Activated B cell treated with CpG ODN at 0.5 μM for 24 hours (primary cell): ENCODE measurements at regions of chr10 and their contacts with region 1.

Region 1: GRCh38 chr10:11611248-11612020 is at the start of gene USP6NL:
- DNase-seq: peak; percentile 82
- ATAC-seq: peak; percentile 72
- H3K4me3 Mint-ChIP-seq: peak within 1 kb of the TSS; percentile 95
- H3K27ac Mint-ChIP-seq: peak within 1 kb of the TSS; percentile 96
- H3K4me1 Mint-ChIP-seq: peaks cover 51% of the 10 kb centered on the region
- H3K27me3 Mint-ChIP-seq: no peaks in the 10 kb centered on the region
- CTCF ChIP-seq: no peak
- total RNA-seq, gene USP6NL: 59.9 and 64.5 TPM in 2 replicates

Region 2: DNA sequence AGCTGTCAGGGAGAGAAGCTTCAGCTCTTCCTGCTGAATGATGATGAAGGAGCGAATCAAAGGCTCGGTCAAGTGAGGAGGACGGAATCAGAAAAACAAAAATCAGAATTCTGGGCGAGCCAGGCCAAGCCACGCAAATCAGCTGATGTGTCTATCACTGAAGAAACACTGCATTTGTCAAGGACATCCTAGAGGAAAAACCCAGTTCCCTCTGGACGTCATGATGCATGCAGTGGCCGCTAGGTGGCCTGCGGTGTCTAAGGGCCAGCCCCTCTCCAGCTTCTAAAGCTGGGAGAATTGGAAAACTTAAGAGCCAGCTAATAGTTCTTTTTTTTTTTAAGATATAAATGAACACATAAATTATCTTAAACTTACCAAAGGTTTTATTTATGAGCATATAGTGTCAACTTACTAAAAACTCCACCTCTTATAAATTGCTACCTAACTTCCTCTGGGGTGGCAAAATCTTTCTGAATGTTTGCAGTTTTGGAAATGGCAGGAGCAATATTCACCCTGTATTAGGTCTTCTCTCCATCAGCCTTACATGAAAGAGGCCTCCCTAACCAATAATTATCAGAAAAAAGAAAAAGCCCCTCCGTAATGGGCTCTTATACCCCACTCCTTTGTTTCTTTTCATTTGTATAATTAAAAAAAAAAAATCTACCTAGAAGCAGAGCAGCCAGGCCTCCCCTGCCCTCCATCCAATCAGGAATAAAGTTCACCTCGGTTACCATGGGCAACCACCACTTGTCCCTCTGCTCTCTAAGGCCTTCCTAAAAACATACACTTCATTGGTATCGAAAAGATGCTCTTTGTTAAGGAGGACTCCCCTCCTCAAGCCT is 186.8 kb before region 1 on chr10:
- CTCF ChIA-PET with region 1: no interaction called
- POLR2A ChIA-PET with region 1: no interaction called
- intact Hi-C with region 1: no loop called
- DNase-seq: no peak
- ATAC-seq: no peak
- H3K4me3 Mint-ChIP-seq: no peak overlapping the region
- H3K27ac Mint-ChIP-seq: no peak overlapping the region
- H3K4me1 Mint-ChIP-seq: no peaks in the 10 kb centered on the region
- H3K27me3 Mint-ChIP-seq: no peaks in the 10 kb centered on the region
- CTCF ChIP-seq: no peak

Region 3: DNA sequence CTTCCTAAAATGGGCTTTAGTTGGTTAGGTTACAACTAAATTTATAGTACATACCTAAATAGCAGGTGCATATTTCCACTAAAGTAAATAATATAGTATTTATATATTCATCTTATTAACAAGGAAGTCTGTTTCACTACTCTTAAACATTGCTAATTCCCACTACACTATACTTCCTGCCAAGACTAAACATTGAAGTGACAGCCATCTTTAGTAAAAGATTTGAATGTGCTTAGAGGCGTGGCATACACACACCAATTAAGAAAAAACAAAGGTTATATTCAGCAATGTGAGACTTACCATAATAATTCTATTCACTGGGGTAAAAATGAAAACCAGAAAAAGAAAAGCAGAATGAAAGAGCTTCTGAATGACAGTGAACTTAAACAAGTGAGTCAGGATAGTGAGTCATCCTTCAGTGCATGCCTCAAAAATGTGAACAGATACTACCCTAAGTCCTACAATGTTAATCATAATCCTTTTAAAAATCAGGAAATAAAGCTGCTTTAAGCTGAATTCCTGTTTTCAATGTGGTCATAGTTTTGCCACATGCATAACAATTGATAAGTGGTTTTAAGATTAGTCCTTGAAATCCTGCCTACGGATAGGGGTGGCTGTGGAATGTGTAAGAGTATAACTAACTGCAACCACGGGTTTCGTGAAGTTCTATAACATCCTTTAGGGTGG is 59.4 kb before region 1 on chr10:
- CTCF ChIA-PET with region 1: interaction called, 7 read pairs
- POLR2A ChIA-PET with region 1: interaction called, 9 read pairs
- intact Hi-C with region 1: loop called (anchors 2 kb)
- DNase-seq: no peak
- ATAC-seq: peak; percentile 55
- H3K4me3 Mint-ChIP-seq: peak overlapping the region; percentile 66
- H3K27ac Mint-ChIP-seq: peak overlapping the region; percentile 87
- H3K4me1 Mint-ChIP-seq: peaks cover 83% of the 10 kb centered on the region
- H3K27me3 Mint-ChIP-seq: no peaks in the 10 kb centered on the region
- CTCF ChIP-seq: no peak

Region 4: GRCh38 chr10:11595395-11595692 is 16.1 kb before region 1 on chr10:
- CTCF ChIA-PET with region 1: interaction called, 12 read pairs
- POLR2A ChIA-PET with region 1: interaction called, 8 read pairs
- intact Hi-C with region 1: no loop called
- DNase-seq: no peak
- ATAC-seq: peak; percentile 46
- H3K4me3 Mint-ChIP-seq: peak overlapping the region; percentile 64
- H3K27ac Mint-ChIP-seq: peak overlapping the region; percentile 90
- H3K4me1 Mint-ChIP-seq: peaks cover 75% of the 10 kb centered on the region
- H3K27me3 Mint-ChIP-seq: no peaks in the 10 kb centered on the region
- CTCF ChIP-seq: no peak

Region 5: GRCh38 chr10:11647676-11648075 is 36.2 kb after region 1 on chr10:
- CTCF ChIA-PET with region 1: no interaction called
- POLR2A ChIA-PET with region 1: interaction called, 11 read pairs
- intact Hi-C with region 1: no loop called
- DNase-seq: no peak
- ATAC-seq: no peak
- H3K4me3 Mint-ChIP-seq: no peak overlapping the region
- H3K27ac Mint-ChIP-seq: no peak overlapping the region
- H3K4me1 Mint-ChIP-seq: peaks cover under 1% of the 10 kb centered on the region
- H3K27me3 Mint-ChIP-seq: no peaks in the 10 kb centered on the region
- CTCF ChIP-seq: no peak

Region 6: GRCh38 chr10:11678074-11678793 is 66.8 kb after region 1 on chr10:
- CTCF ChIA-PET with region 1: interaction called, 4 read pairs
- POLR2A ChIA-PET with region 1: interaction called, 85 read pairs
- intact Hi-C with region 1: no loop called
- DNase-seq: peak; percentile 51
- ATAC-seq: peak; percentile 80
- H3K4me3 Mint-ChIP-seq: peak overlapping the region; percentile 77
- H3K27ac Mint-ChIP-seq: peak overlapping the region; percentile 94
- H3K4me1 Mint-ChIP-seq: peaks cover 94% of the 10 kb centered on the region
- H3K27me3 Mint-ChIP-seq: no peaks in the 10 kb centered on the region
- CTCF ChIP-seq: no peak

Region 7: GRCh38 chr10:12252882-12253546 is 641.6 kb after region 1 on chr10:
- CTCF ChIA-PET with region 1: no interaction called
- POLR2A ChIA-PET with region 1: no interaction called
- intact Hi-C with region 1: no loop called
- DNase-seq: no peak
- ATAC-seq: peak; percentile 98
- H3K4me3 Mint-ChIP-seq: peak overlapping the region; percentile 55
- H3K27ac Mint-ChIP-seq: peak overlapping the region; percentile 74
- H3K4me1 Mint-ChIP-seq: peaks cover 10% of the 10 kb centered on the region
- H3K27me3 Mint-ChIP-seq: no peaks in the 10 kb centered on the region
- CTCF ChIP-seq: peak; percentile 21

Region 8: DNA sequence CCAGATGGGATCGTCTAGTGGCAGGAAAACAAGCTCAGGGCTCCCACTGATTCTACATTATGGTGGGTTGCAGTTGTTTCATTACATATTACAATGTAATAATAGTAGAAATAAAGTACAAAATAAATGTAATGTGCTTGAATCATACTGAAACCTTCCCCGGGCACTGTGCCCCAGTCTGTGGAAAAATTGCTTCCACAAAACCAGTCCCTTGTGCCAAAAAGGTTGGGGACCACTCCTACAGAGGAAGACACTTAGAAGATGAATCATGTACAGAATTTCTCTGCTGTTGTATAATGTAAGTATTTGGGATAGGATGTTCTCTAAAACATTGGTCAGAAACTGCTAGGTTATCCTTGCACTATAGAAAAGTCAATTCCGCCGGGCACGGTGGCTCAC is 1699.7 kb after region 1 on chr10:
- CTCF ChIA-PET with region 1: no interaction called
- POLR2A ChIA-PET with region 1: no interaction called
- intact Hi-C with region 1: no loop called
- DNase-seq: no peak
- ATAC-seq: no peak
- H3K4me3 Mint-ChIP-seq: no peak overlapping the region
- H3K27ac Mint-ChIP-seq: no peak overlapping the region
- H3K4me1 Mint-ChIP-seq: no peaks in the 10 kb centered on the region
- H3K27me3 Mint-ChIP-seq: no peaks in the 10 kb centered on the region
- CTCF ChIP-seq: no peak